Heart left ventricle (tissue), 16 donors: ENCODE measurements at regions of chr19 and their contacts with region 1.

Region 1: DNA sequence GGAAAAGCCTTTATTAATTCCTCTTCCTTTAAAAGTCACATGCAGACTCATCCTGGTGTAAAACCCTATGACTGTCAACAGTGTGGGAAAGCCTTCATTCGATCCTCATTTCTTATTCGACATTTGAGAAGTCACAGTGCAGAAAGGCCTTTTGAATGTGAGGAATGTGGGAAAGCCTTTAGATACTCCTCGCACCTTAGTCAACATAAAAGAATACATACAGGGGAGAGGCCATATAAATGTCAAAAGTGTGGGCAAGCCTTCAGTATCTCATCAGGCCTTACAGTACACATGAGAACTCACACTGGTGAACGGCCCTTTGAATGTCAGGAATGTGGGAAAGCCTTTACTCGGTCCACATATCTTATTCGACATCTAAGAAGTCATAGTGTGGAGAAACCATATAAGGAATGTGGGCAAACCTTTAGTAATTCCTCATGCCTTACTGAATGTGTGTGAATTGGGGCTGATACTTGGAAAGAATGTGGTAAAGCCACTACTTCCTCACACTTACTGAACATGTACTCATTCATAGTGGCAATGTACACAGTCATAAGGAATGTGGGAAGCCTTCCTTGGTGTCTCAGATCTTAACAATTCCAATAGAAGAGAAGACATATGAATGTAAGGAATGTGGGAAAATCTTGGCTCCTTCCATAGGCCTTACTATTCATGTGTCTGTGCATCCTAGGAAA is 18.8 kb downstream of the ZNF559 start:
- DNase-seq: no peak
- ATAC-seq: no peak
- H3K4me3 ChIP-seq: no peak overlapping the region
- H3K27ac ChIP-seq: no peak overlapping the region
- H3K4me1 ChIP-seq: no peaks in the 10 kb centered on the region
- H3K27me3 ChIP-seq: no peaks in the 10 kb centered on the region
- CTCF ChIP-seq: no peak
- POLR2A ChIP-seq: no peak

Region 2: GRCh38 chr19:8609279-8610040 is 733.3 kb before region 1 on chr19:
- intact Hi-C with region 1: no loop called
- DNase-seq: peak; percentile 62 to 84 (median 76)
- ATAC-seq: peak in 3 of 4 donors; percentile 65 to 76 (median 67)
- H3K4me3 ChIP-seq: peak overlapping the region; percentile 32 to 92 (median 65)
- H3K27ac ChIP-seq: peak overlapping the region; percentile 50 to 92 (median 84)
- H3K4me1 ChIP-seq: peaks cover 0 to 31% (median 13%) of the 10 kb centered on the region in 12 donors
- H3K27me3 ChIP-seq: peaks cover 0 to 6% (median 0%) of the 10 kb centered on the region in 9 donors
- CTCF ChIP-seq: peak in 7 of 12 donors; percentile 10 to 40 (median 24)
- POLR2A ChIP-seq: no peak

Region 3: DNA sequence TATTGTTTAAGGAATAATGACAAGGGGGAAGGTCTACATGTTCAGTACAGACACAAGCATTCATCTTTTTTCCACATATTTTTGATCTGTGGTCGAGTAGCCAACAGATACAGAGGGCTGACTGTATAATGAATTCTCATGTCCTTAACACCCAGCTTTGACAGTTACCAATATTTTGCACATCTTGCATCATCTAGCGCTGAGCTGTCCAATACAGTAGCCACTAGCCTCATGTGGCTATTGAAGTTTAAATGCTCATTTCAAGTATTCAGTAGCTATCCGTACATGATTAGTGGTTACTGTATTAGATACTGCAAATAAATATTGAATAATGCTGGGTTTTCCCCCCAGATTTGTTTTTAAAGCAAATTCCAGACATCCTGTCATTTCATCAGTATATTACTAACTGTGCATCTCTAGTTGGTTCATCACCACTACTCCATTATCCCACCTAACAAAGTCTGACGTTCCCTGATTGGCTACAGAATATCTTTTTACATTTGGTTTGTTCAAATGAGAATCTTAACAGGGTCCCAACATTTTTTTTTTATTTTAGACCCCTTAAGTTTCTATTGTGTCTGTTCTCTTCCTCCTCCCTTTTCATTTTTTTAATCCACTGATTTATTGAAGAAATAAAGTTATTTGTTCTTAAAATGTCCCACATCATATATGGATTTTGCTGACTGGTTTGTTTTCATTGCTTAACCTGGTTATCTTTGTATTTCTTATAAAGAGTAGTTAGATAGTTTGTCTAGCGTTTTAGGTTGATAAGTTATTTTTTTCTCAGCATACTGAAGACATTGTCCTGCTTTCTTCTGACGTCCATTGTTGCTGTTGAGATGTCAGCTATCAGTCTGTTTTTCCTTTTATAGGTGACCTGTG is 28.2 kb after region 1 on chr19:
- intact Hi-C with region 1: loop called in 1 of 10 experiments (anchors 5 kb)
- DNase-seq: no peak
- ATAC-seq: no peak
- H3K4me3 ChIP-seq: no peak overlapping the region
- H3K27ac ChIP-seq: no peak overlapping the region
- H3K4me1 ChIP-seq: no peaks in the 10 kb centered on the region
- H3K27me3 ChIP-seq: no peaks in the 10 kb centered on the region
- CTCF ChIP-seq: no peak
- POLR2A ChIP-seq: no peak

Region 4: GRCh38 chr19:9381367-9381785 is 38.6 kb after region 1 on chr19:
- intact Hi-C with region 1: loop called in 1 of 10 experiments (anchors 5 kb)
- DNase-seq: no peak
- ATAC-seq: no peak
- H3K4me3 ChIP-seq: no peak overlapping the region
- H3K27ac ChIP-seq: no peak overlapping the region
- H3K4me1 ChIP-seq: no peaks in the 10 kb centered on the region
- H3K27me3 ChIP-seq: no peaks in the 10 kb centered on the region
- CTCF ChIP-seq: no peak
- POLR2A ChIP-seq: no peak